Vagina (tissue), 2 donors: ENCODE measurements at regions of chr2 and their contacts with region 1.

Region 1: GRCh38 chr2:119276864-119277263 is 53.2 kb downstream of the STEAP3 start:
- DNase-seq: no peak
- H3K4me3 ChIP-seq: no peak overlapping the region
- H3K27ac ChIP-seq: no peak overlapping the region
- H3K4me1 ChIP-seq: no peaks in the 10 kb centered on the region
- H3K27me3 ChIP-seq: no peaks in the 10 kb centered on the region
- CTCF ChIP-seq: no peak
- POLR2A ChIP-seq: no peak

Region 2: GRCh38 chr2:118593257-118593656 is 683.6 kb before region 1 on chr2:
- intact Hi-C with region 1: loop called (anchors 10 kb)
- DNase-seq: no peak
- H3K4me3 ChIP-seq: no peak overlapping the region
- H3K27ac ChIP-seq: no peak overlapping the region
- H3K4me1 ChIP-seq: no peaks in the 10 kb centered on the region
- H3K27me3 ChIP-seq: no peaks in the 10 kb centered on the region
- CTCF ChIP-seq: no peak
- POLR2A ChIP-seq: no peak

Region 3: DNA sequence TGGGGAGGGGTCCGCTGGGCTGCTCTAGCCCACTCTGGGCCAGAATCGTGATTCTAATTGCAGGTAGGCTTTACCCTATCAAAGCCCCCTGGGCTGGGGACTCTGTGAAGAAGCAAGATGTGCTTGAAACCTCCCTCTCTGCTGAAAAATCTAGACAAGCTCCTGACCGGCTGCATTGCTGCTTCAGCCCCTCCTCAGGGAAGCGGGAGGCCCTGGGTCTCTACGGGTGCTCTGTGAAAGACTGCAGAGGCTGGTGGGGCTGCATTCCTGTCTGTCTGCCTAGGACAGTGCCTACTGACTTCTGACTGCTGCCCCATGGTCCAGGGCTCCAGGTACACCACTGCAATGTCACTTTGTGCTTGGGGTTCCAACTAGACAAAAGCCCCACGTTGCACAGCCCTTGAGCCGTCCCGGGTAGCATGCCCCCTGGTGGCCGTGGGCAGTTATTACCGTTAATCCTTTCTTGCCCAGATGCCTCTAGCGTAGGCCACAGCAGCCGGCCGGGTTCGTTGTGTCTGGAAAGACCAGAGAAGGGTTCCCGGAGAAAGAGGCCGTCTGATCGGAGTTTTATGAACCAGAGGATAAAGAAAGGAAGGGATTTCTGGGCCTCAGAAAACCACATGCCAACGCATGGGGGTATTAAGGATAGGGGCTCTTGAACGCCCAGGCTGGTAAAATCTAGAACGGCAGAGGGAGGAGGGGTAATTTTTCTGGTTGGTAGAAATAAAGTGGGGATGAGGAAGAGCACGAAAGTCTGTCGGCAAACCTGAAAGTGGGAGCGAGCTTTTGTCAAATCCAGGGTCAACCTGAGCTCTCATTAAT is 102.4 kb before region 1 on chr2:
- intact Hi-C with region 1: no loop called
- DNase-seq: no peak
- H3K4me3 ChIP-seq: no peak overlapping the region
- H3K27ac ChIP-seq: no peak overlapping the region
- H3K4me1 ChIP-seq: no peaks in the 10 kb centered on the region
- H3K27me3 ChIP-seq: no peaks in the 10 kb centered on the region
- CTCF ChIP-seq: peak in 1 of 3 experiments; percentile 11
- POLR2A ChIP-seq: no peak